ENCODE measurements at regions of chr16 and their contacts with region 1.

Region 1: DNA sequence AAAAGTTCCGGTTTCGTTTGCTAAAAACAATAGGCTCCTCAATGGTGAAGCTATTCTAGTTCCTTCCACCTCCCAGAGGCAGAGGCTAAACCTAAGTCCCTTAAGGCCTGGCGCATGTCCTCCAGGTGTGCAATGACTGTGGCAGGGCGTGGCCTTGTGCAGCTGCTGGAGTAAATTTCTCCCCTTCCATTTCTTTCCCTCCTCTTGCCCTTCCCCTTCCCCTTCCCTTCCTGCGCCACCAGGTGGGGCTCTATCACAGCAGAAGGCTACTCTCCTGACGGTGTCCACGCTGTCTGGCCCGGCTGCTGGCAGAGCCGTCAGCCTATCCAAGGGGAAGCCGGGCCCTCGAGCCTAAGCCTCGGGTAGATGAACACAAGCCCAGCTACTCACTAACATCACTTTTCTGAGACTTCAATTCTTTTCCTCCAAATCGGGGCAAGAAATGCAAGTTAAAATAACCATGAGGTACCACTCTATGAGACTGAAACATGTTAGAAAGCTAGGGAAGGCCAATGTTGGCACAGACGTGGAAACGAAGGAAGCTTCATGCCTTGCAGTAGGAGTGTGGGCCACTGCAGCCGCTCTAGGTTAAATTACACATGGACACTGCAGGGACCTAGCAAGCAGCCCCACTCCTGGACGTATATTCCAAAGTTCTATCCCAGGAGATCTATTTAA is 34.4 kb downstream of the C16orf78 start:
- DNase-seq: peak; percentile 85
- H3K4me3 Mint-ChIP-seq: no peak overlapping the region
- H3K27ac Mint-ChIP-seq: no peak overlapping the region
- H3K4me1 Mint-ChIP-seq: peaks cover 1% of the 10 kb centered on the region
- H3K27me3 Mint-ChIP-seq: peaks cover 4% of the 10 kb centered on the region

Region 2: GRCh38 chr16:49491771-49492761 is 84.1 kb after region 1 on chr16:
- CTCF ChIA-PET with region 1: interaction called, 3 read pairs
- intact Hi-C with region 1: loop called (anchors 5 kb)
- DNase-seq: peak; percentile 37
- H3K4me3 Mint-ChIP-seq: no peak overlapping the region
- H3K27ac Mint-ChIP-seq: no peak overlapping the region
- H3K4me1 Mint-ChIP-seq: no peaks in the 10 kb centered on the region
- H3K27me3 Mint-ChIP-seq: no peaks in the 10 kb centered on the region

Region 3: DNA sequence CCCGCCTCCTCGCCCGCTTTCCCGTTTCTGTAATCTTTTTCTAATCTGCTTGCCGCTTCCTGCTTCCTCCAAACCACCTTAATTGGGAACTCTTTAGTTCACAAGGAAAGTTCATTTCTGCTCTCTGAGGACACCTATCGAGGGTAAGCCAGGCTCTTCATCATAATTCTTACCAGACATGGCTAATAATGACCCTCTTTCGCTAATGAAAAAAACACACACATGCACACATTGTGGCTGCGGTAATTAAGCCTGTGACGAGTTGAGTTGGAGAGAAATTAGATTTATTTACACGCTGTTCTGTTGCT is 347.3 kb after region 1 on chr16:
- CTCF ChIA-PET with region 1: no interaction called
- intact Hi-C with region 1: loop called (anchors 1 kb)
- DNase-seq: no peak
- H3K4me3 Mint-ChIP-seq: no peak overlapping the region
- H3K27ac Mint-ChIP-seq: no peak overlapping the region
- H3K4me1 Mint-ChIP-seq: peaks cover 10% of the 10 kb centered on the region
- H3K27me3 Mint-ChIP-seq: peaks cover 20% of the 10 kb centered on the region

Region 4: GRCh38 chr16:49921791-49922456 is 513.9 kb after region 1 on chr16:
- CTCF ChIA-PET with region 1: interaction called, 10 read pairs
- intact Hi-C with region 1: loop called (anchors 2 kb)
- DNase-seq: peak; percentile 70
- H3K4me3 Mint-ChIP-seq: no peak overlapping the region
- H3K27ac Mint-ChIP-seq: no peak overlapping the region
- H3K4me1 Mint-ChIP-seq: no peaks in the 10 kb centered on the region
- H3K27me3 Mint-ChIP-seq: peaks cover 3% of the 10 kb centered on the region